Activated naive CD4-positive, alpha-beta T cell treated with anti-CD3 and anti-CD28 coated beads for 36 hours (primary cell): ENCODE measurements at regions of chr4 and their contacts with region 1.

Region 1: GRCh38 chr4:7876201-7876875 is 63.3 kb downstream of the AFAP1 start:
- DNase-seq: peak; percentile 45
- H3K4me3 Mint-ChIP-seq: peak overlapping the region; percentile 54
- H3K27ac Mint-ChIP-seq: peak overlapping the region; percentile 74
- H3K4me1 Mint-ChIP-seq: peaks cover 49% of the 10 kb centered on the region
- H3K27me3 Mint-ChIP-seq: no peaks in the 10 kb centered on the region

Region 2: GRCh38 chr4:7398104-7398423 is 478.3 kb before region 1 on chr4:
- CTCF ChIA-PET with region 1: no interaction called
- intact Hi-C with region 1: no loop called
- DNase-seq: no peak
- H3K4me3 Mint-ChIP-seq: no peak overlapping the region
- H3K27ac Mint-ChIP-seq: no peak overlapping the region
- H3K4me1 Mint-ChIP-seq: no peaks in the 10 kb centered on the region
- H3K27me3 Mint-ChIP-seq: peaks cover 12% of the 10 kb centered on the region

Region 3: GRCh38 chr4:7827991-7828720 is 48.2 kb before region 1 on chr4:
- CTCF ChIA-PET with region 1: no interaction called
- intact Hi-C with region 1: loop called (anchors 2 kb)
- DNase-seq: peak; percentile 65
- H3K4me3 Mint-ChIP-seq: peak overlapping the region; percentile 11
- H3K27ac Mint-ChIP-seq: peak overlapping the region; percentile 84
- H3K4me1 Mint-ChIP-seq: peaks cover 56% of the 10 kb centered on the region
- H3K27me3 Mint-ChIP-seq: no peaks in the 10 kb centered on the region

Region 4: DNA sequence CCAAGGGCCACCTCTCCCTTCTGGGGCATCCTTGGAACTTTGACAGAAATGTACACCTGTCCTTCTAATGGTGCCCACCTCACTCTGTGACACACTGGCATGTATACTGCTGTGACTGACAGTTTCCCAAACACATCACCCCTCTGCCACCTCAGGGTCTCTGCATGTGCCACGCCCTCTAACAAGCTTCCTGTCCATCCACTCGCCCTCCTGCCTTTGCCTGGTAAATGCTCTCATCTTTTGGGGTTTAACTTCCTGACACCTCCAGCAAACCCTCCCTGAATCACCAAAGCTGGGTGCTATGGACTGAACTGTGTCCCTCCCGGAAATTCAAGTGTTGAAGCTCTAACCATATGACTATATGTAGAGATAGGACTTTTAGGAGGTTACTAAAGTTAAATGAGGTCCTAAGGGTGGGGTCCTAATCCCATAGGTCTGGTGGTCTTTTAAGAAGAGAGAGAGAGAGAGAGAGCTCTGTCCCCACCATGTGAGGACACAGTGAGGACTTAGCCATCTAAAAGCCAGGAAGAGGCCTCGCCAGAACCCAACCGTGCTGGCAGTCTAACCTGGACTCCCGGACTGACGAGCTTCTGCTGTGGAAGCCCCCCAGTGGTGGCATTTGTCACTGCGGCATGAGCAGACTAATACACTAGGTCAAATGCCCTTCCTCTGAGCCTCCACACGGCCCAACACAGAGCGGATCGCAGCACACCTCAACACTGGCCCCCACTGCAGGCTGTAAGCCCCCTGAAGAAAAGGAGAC is 32.3 kb before region 1 on chr4:
- CTCF ChIA-PET with region 1: interaction called, 10 read pairs
- intact Hi-C with region 1: loop called (anchors 1 kb)
- DNase-seq: peak; percentile 77
- H3K4me3 Mint-ChIP-seq: no peak overlapping the region
- H3K27ac Mint-ChIP-seq: peak overlapping the region; percentile 20
- H3K4me1 Mint-ChIP-seq: peaks cover 26% of the 10 kb centered on the region
- H3K27me3 Mint-ChIP-seq: no peaks in the 10 kb centered on the region

Region 5: GRCh38 chr4:7917662-7918061 is 41.3 kb after region 1 on chr4:
- CTCF ChIA-PET with region 1: no interaction called
- intact Hi-C with region 1: loop called (anchors 5 kb)
- DNase-seq: no peak
- H3K4me3 Mint-ChIP-seq: no peak overlapping the region
- H3K27ac Mint-ChIP-seq: no peak overlapping the region
- H3K4me1 Mint-ChIP-seq: peaks cover 38% of the 10 kb centered on the region
- H3K27me3 Mint-ChIP-seq: no peaks in the 10 kb centered on the region

Region 6: GRCh38 chr4:7939377-7940108 is 63.2 kb after region 1 on chr4 and contains the start of gene AFAP1:
- CTCF ChIA-PET with region 1: interaction called, 9 read pairs
- intact Hi-C with region 1: loop called (anchors 2 kb)
- DNase-seq: peak; percentile 86
- H3K4me3 Mint-ChIP-seq: peak within 1 kb of the TSS; percentile 69
- H3K27ac Mint-ChIP-seq: no peak within 1 kb of the TSS
- H3K4me1 Mint-ChIP-seq: peaks cover 33% of the 10 kb centered on the region
- H3K27me3 Mint-ChIP-seq: no peaks in the 10 kb centered on the region
- total RNA-seq, gene AFAP1: 26.7 to 28.8 TPM

Region 7: GRCh38 chr4:7960790-7961655 is 84.7 kb after region 1 on chr4:
- CTCF ChIA-PET with region 1: interaction called, 4 read pairs
- intact Hi-C with region 1: loop called (anchors 5 kb)
- DNase-seq: peak; percentile 87
- H3K4me3 Mint-ChIP-seq: peak overlapping the region; percentile 2
- H3K27ac Mint-ChIP-seq: peak overlapping the region; percentile 68
- H3K4me1 Mint-ChIP-seq: peaks cover 48% of the 10 kb centered on the region
- H3K27me3 Mint-ChIP-seq: no peaks in the 10 kb centered on the region